HepG2 (cell line): ENCODE measurements at regions of chr5 and their contacts with region 1.

Region 1: GRCh38 chr5:108079753-108080152 is 302.1 kb downstream of the FBXL17 start:
- DNase-seq: no peak
- ATAC-seq: no peak
- H3K4me3 ChIP-seq: no peak overlapping the region
- H3K27ac ChIP-seq: no peak overlapping the region
- H3K4me1 ChIP-seq: peaks cover 5% of the 10 kb centered on the region
- H3K27me3 ChIP-seq: no peaks in the 10 kb centered on the region
- CTCF ChIP-seq: no peak
- EP300 ChIP-seq: no peak
- POLR2A ChIP-seq: no peak
- RAD21 ChIP-seq: no peak

Region 2: GRCh38 chr5:107887166-107887943 is 192.4 kb before region 1 on chr5:
- CTCF ChIA-PET with region 1: no interaction called
- POLR2A ChIA-PET with region 1: no interaction called
- in situ Hi-C with region 1: no loop called
- intact Hi-C with region 1: loop called (anchors 10 kb)
- DNase-seq: no peak
- ATAC-seq: no peak
- H3K4me3 ChIP-seq: no peak overlapping the region
- H3K27ac ChIP-seq: no peak overlapping the region
- H3K4me1 ChIP-seq: no peaks in the 10 kb centered on the region
- H3K27me3 ChIP-seq: no peaks in the 10 kb centered on the region; a peak in 1 of 5 replicates
- CTCF ChIP-seq: no peak
- EP300 ChIP-seq: no peak
- POLR2A ChIP-seq: no peak
- RAD21 ChIP-seq: no peak

Region 3: GRCh38 chr5:108125771-108126511 is 46.2 kb after region 1 on chr5:
- CTCF ChIA-PET with region 1: no interaction called
- POLR2A ChIA-PET with region 1: no interaction called
- in situ Hi-C with region 1: no loop called
- intact Hi-C with region 1: loop called (anchors 2 kb)
- DNase-seq: peak; percentile 18
- ATAC-seq: peak; percentile 77
- H3K4me3 ChIP-seq: no peak overlapping the region
- H3K27ac ChIP-seq: no peak overlapping the region
- H3K4me1 ChIP-seq: peaks cover 12% of the 10 kb centered on the region
- H3K27me3 ChIP-seq: no peaks in the 10 kb centered on the region
- CTCF ChIP-seq: no peak
- EP300 ChIP-seq: no peak; a peak in 1 of 4 replicates
- POLR2A ChIP-seq: no peak
- RAD21 ChIP-seq: no peak